ENCODE measurements at regions of chr14 and their contacts with region 1.

Region 1: GRCh38 chr14:22939684-22940083 is 10.5 kb upstream of the PRMT5 start:
- DNase-seq: peak; percentile 30
- H3K4me3 ChIP-seq: no peak overlapping the region
- H3K27ac ChIP-seq: peak overlapping the region; percentile 31
- H3K27me3 ChIP-seq: no peaks in the 10 kb centered on the region
- CTCF ChIP-seq: no peak

Region 2: GRCh38 chr14:22531451-22532344 is 408.0 kb before region 1 on chr14:
- CTCF ChIA-PET with region 1: no interaction called
- POLR2A ChIA-PET with region 1: interaction called, 11 read pairs
- DNase-seq: no peak
- H3K4me3 ChIP-seq: no peak overlapping the region
- H3K27ac ChIP-seq: no peak overlapping the region
- H3K27me3 ChIP-seq: no peaks in the 10 kb centered on the region
- CTCF ChIP-seq: no peak

Region 3: GRCh38 chr14:23095196-23096108 is 155.8 kb after region 1 on chr14 and contains the start of gene C14orf119:
- CTCF ChIA-PET with region 1: no interaction called
- POLR2A ChIA-PET with region 1: interaction called, 14 read pairs
- DNase-seq: peak; percentile 99
- H3K4me3 ChIP-seq: peak within 1 kb of the TSS; percentile 95
- H3K27ac ChIP-seq: peak within 1 kb of the TSS; percentile 99
- H3K27me3 ChIP-seq: no peaks in the 10 kb centered on the region
- CTCF ChIP-seq: no peak
- polyA plus RNA-seq, gene C14orf119: 119 and 128 TPM in 2 replicates